ENCODE measurements at regions of chr2 and their contacts with region 1.

Region 1: GRCh38 chr2:222296911-222297599 is 1.7 kb downstream of the PAX3 start:
- DNase-seq: no peak
- H3K4me3 ChIP-seq: no peak overlapping the region
- H3K27ac ChIP-seq: no peak overlapping the region
- H3K4me1 ChIP-seq: no peaks in the 10 kb centered on the region
- CTCF ChIP-seq: no peak

Region 2: GRCh38 chr2:222332116-222332515 is 35.1 kb after region 1 on chr2:
- CTCF ChIA-PET with region 1: no interaction called
- POLR2A ChIA-PET with region 1: no interaction called
- intact Hi-C with region 1: loop called (anchors 2 kb)
- DNase-seq: no peak
- H3K4me3 ChIP-seq: no peak overlapping the region
- H3K27ac ChIP-seq: no peak overlapping the region
- H3K4me1 ChIP-seq: no peaks in the 10 kb centered on the region
- CTCF ChIP-seq: no peak